Activated T-helper 2 cell treated with anti-CD3 and anti-CD28 coated beads, Interferon-gamma antibody, Interleukin-2, Interleukin-4, amounts not matched to agents 10 μg/mL and 5 μg/mL and 100 μg/mL, durations not matched to agents 14 hours and 24 hours and 36 hours (primary cell): ENCODE measurements at regions of chr1 and their contacts with region 1.

Region 1: DNA sequence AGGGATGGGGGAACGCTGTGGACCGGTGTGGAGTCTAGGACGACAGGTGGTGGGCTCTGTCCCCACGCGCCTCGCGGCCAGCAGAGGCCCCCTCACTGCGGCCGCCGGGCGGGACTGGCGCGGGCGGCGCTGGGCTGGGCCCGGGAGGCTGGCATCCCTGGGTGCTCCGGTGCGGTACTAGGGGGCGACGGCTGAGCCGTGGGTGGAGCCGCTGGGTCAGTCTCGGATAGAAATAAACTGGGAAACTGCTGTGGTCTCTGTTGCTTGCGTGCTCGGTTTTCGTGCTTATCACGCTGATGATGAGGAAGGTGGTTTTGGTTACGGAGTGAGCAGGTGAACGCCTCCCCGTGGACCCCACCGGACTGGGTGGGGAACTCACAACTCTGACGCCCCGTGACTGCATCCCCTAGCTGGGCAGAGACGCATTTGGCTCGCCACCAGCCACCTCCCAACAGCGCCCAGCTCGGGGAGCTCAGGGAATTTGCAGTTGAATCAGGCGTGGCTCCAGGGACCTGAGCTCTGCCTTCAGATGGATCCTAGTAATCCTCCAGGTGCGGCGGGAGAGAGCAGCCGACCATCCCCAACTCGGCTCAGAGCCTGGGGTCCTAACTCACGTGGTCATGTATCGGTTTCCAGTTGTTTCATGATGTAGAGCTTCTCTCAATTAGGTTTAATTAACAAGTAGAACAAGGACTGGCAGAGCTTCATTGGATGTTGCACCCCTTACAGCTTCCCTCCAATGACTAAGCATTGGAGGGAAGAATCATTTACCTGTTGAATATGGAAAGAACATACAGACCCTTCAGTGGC is 32.1 kb downstream of the HSD17B7 start:
- DNase-seq: no peak
- H3K4me3 Mint-ChIP-seq: peak overlapping the region; percentile 66
- H3K27ac Mint-ChIP-seq: no peak overlapping the region
- H3K4me1 Mint-ChIP-seq: peaks cover 21% of the 10 kb centered on the region
- H3K27me3 Mint-ChIP-seq: peaks cover 29% of the 10 kb centered on the region

Region 2: GRCh38 chr1:162117039-162117774 is 705.4 kb before region 1 on chr1:
- intact Hi-C with region 1: no loop called
- DNase-seq: no peak
- H3K4me3 Mint-ChIP-seq: no peak overlapping the region
- H3K27ac Mint-ChIP-seq: no peak overlapping the region
- H3K4me1 Mint-ChIP-seq: no peaks in the 10 kb centered on the region
- H3K27me3 Mint-ChIP-seq: peaks cover 3% of the 10 kb centered on the region

Region 3: GRCh38 chr1:162835157-162835899 is 12.7 kb after region 1 on chr1:
- intact Hi-C with region 1: loop called (anchors 1 kb)
- DNase-seq: no peak
- H3K4me3 Mint-ChIP-seq: no peak overlapping the region
- H3K27ac Mint-ChIP-seq: peak overlapping the region; percentile 38
- H3K4me1 Mint-ChIP-seq: peaks cover 21% of the 10 kb centered on the region
- H3K27me3 Mint-ChIP-seq: peaks cover 11% of the 10 kb centered on the region